Activated CD4-positive, alpha-beta memory T cell treated with anti-CD3 and anti-CD28 coated beads, Interleukin-2, amount 10 ng/mL, durations not matched to agents 7 days and 5 days (primary cell): ENCODE measurements at regions of chr13 and their contacts with region 1.

Region 1: DNA sequence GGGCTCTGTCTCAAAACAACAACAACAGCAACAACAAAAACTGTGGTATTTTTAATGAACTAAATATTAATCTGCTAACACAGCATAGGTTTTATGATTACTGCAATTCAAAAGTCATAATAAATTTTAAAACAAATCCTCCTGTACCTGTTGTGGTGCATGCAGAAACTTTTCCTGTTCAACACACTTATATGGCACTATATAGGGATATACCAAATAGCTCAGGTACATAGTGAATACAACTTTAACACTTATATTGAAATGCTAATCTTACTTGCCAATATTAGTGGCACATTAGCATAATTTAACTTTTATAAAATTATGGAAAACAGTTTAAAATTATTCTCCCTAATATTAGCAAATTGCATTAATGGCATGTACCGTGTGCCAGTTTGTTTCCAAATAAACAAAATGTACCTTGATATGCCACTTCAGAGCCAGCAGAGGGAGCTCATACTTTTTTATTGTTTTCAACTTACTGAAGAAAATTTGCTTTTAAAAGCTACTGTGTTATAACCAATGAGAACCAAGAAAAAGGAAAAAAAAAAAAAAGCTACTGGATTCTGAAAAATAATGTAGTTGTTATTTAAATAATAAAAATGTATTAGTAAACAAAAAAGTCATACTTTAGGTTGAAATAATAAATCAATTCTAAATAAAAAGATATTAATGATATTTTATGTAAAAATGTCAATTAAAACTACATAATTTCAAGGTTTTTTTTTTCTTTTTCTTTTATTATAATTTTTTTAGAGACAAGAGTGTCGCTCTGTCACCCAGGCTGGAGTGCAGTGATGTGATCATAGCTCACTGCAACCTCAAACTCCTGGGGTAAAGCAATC is 18.0 kb upstream of the RBM26 start:
- DNase-seq: no peak
- H3K4me3 Mint-ChIP-seq: no peak overlapping the region
- H3K27ac Mint-ChIP-seq: no peak overlapping the region
- H3K4me1 Mint-ChIP-seq: peaks cover 8% of the 10 kb centered on the region
- H3K27me3 Mint-ChIP-seq: no peaks in the 10 kb centered on the region

Region 2: DNA sequence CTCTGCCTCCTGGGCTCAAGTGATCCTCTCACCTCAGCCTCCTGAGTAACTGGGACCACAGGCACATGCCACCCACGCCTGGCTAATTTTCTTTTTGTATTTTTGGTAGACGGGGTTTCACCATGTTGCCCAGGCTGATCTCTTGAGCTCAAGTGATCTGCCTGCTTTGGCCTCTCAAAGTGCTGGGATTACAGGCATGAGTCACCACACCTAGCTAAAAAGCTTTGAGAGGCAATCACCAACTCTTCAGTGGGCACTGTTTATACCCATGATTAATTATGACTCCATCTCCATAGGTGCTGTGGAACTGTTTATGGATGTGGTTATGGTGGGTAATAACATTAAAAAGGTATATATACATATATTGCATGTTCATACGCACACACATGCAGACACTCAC is 10.5 kb before region 1 on chr13:
- CTCF ChIA-PET with region 1: interaction called, 18 read pairs
- POLR2A ChIA-PET with region 1: no interaction called
- DNase-seq: no peak
- H3K4me3 Mint-ChIP-seq: no peak overlapping the region
- H3K27ac Mint-ChIP-seq: no peak overlapping the region
- H3K4me1 Mint-ChIP-seq: peaks cover 9% of the 10 kb centered on the region
- H3K27me3 Mint-ChIP-seq: no peaks in the 10 kb centered on the region

Region 3: DNA sequence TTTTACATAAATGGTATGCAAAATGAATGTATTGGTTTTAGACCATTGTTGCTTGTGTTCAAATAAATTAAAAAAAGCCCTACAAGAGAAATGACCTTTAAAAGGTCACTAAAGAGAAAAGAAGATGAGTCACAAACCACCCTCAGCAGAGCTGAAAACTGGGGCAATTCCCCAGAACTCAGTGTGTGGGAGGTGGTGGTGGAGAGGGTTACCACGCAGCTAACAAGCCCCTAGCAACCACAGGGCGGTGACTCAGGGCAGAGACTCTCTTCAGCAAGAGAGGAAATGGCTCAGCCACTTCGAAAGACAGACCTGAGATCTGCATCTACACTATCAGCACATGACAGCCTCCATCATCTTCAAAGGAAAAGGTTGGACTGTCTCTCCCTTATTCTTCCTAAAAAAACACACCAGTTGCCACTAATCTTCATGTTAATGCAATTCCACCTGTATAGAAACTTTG is 27.5 kb after region 1 on chr13:
- CTCF ChIA-PET with region 1: interaction called, 13 read pairs
- POLR2A ChIA-PET with region 1: interaction called, 4 read pairs
- DNase-seq: peak; percentile 93
- H3K4me3 Mint-ChIP-seq: peak overlapping the region; percentile 66
- H3K27ac Mint-ChIP-seq: peak overlapping the region; percentile 89
- H3K4me1 Mint-ChIP-seq: peaks cover 76% of the 10 kb centered on the region
- H3K27me3 Mint-ChIP-seq: no peaks in the 10 kb centered on the region

Region 4: GRCh38 chr13:79480954-79481684 is 57.1 kb after region 1 on chr13 and contains the start of gene NDFIP2:
- CTCF ChIA-PET with region 1: interaction called, 49 read pairs
- POLR2A ChIA-PET with region 1: interaction called, 6 read pairs
- DNase-seq: peak; percentile 89
- H3K4me3 Mint-ChIP-seq: peak within 1 kb of the TSS; percentile 90
- H3K27ac Mint-ChIP-seq: peak within 1 kb of the TSS; percentile 83
- H3K4me1 Mint-ChIP-seq: peaks cover 44% of the 10 kb centered on the region
- H3K27me3 Mint-ChIP-seq: peaks cover 23% of the 10 kb centered on the region
- total RNA-seq, gene NDFIP2: 49.6 to 53.2 TPM

Region 5: DNA sequence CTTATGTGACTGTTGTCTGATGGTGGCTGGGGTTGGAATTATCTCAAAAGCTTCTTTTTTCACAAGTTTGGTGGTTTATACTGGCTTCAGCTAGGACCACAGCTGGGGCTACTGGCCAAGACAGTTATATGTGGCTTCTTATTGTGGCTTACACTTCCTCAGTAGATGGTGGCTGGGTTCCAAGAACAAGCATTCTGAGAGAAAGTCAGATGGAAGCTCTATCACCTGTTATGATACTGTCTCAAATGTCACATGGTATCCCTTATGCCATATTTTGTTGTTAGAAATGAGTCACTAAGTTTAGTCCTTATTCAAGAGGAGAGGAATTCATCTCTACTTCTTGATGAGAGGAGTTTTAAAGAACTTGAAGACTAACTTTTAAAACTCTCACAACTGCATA is 98.6 kb after region 1 on chr13:
- CTCF ChIA-PET with region 1: interaction called, 27 read pairs
- POLR2A ChIA-PET with region 1: interaction called, 3 read pairs
- DNase-seq: peak; percentile 66
- H3K4me3 Mint-ChIP-seq: peak overlapping the region; percentile 53
- H3K27ac Mint-ChIP-seq: peak overlapping the region; percentile 85
- H3K4me1 Mint-ChIP-seq: peaks cover 29% of the 10 kb centered on the region
- H3K27me3 Mint-ChIP-seq: no peaks in the 10 kb centered on the region

Region 6: DNA sequence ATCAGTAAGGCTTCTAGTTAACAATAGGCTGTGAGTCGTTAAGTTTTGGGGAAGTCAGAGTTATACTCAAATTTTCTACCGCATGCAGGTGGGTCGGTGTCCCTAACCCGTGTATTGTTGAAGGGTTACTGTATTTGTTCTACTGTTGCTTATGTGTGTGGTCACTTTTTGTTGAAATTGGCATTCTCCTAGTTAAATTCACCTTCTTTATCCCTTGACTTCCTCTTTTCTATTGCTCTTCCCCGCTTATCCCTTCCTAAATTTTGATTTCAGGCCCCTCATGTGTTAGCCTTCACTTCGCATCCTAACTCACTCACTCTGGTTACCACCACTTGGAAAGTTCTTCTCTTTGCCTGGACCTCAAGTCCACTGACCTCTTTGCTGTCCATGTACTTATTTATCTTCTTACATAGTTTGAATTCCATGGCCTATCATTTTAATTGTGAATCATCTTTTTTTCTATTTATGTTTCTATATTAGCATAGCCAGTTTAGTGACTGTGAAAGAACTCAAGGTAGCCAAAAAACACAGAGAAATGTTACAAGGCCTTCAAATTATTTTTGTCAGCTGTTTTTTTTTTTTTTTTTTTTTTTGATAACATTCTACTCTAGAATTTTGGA is 109.9 kb after region 1 on chr13:
- CTCF ChIA-PET with region 1: interaction called, 181 read pairs
- POLR2A ChIA-PET with region 1: no interaction called
- DNase-seq: no peak
- H3K4me3 Mint-ChIP-seq: no peak overlapping the region
- H3K27ac Mint-ChIP-seq: no peak overlapping the region
- H3K4me1 Mint-ChIP-seq: peaks cover 34% of the 10 kb centered on the region
- H3K27me3 Mint-ChIP-seq: no peaks in the 10 kb centered on the region